Panc1 (cell line): ENCODE measurements at regions of chr21 and their contacts with region 1.

Region 1: DNA sequence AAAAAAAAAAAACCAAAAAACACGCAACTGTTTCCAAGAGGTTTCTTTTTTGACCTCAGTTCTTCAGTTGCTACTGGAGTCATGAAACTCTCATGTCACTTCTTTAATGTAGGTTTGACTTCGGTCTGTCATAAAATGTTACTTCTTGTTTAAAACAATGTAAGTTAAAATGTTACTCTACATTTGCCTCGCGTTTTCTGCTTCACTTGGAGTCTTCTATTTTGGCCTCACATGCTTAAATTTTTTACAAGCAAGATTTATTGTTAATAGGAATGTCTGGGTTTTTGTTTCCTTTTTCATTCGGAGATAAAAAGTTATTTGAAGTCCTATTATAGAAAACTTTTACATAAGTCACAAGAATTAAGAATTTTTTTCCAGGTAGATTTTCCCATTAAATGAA is 880.2 kb downstream of the LTN1 start:
- DNase-seq: no peak
- ATAC-seq: no peak
- H3K4me3 ChIP-seq: no peak overlapping the region
- H3K27ac ChIP-seq: no peak overlapping the region
- H3K4me1 ChIP-seq: no peaks in the 10 kb centered on the region
- H3K27me3 ChIP-seq: no peaks in the 10 kb centered on the region
- CTCF ChIP-seq: no peak

Region 2: GRCh38 chr21:27371115-27371974 is 741.2 kb before region 1 on chr21:
- CTCF ChIA-PET with region 1: no interaction called
- POLR2A ChIA-PET with region 1: interaction called, 14 read pairs
- in situ Hi-C with region 1: no loop called
- intact Hi-C with region 1: no loop called
- DNase-seq: no peak
- ATAC-seq: no peak
- H3K4me3 ChIP-seq: no peak overlapping the region
- H3K27ac ChIP-seq: no peak overlapping the region
- H3K4me1 ChIP-seq: no peaks in the 10 kb centered on the region
- H3K27me3 ChIP-seq: no peaks in the 10 kb centered on the region
- CTCF ChIP-seq: no peak

Region 3: GRCh38 chr21:28099001-28099705 is 13.4 kb before region 1 on chr21:
- CTCF ChIA-PET with region 1: no interaction called
- POLR2A ChIA-PET with region 1: no interaction called
- in situ Hi-C with region 1: no loop called
- intact Hi-C with region 1: no loop called
- DNase-seq: no peak
- ATAC-seq: no peak
- H3K4me3 ChIP-seq: no peak overlapping the region
- H3K27ac ChIP-seq: no peak overlapping the region
- H3K4me1 ChIP-seq: no peaks in the 10 kb centered on the region
- H3K27me3 ChIP-seq: no peaks in the 10 kb centered on the region
- CTCF ChIP-seq: no peak

Region 4: GRCh38 chr21:28207436-28208173 is 95.1 kb after region 1 on chr21:
- CTCF ChIA-PET with region 1: no interaction called
- POLR2A ChIA-PET with region 1: no interaction called
- in situ Hi-C with region 1: no loop called
- intact Hi-C with region 1: no loop called
- DNase-seq: no peak
- ATAC-seq: no peak
- H3K4me3 ChIP-seq: no peak overlapping the region
- H3K27ac ChIP-seq: no peak overlapping the region
- H3K4me1 ChIP-seq: no peaks in the 10 kb centered on the region
- H3K27me3 ChIP-seq: no peaks in the 10 kb centered on the region
- CTCF ChIP-seq: no peak

Region 5: GRCh38 chr21:28298251-28298672 is 185.8 kb after region 1 on chr21:
- CTCF ChIA-PET with region 1: no interaction called
- POLR2A ChIA-PET with region 1: no interaction called
- in situ Hi-C with region 1: no loop called
- intact Hi-C with region 1: no loop called
- DNase-seq: no peak
- ATAC-seq: no peak
- H3K4me3 ChIP-seq: no peak overlapping the region
- H3K27ac ChIP-seq: no peak overlapping the region
- H3K4me1 ChIP-seq: no peaks in the 10 kb centered on the region
- H3K27me3 ChIP-seq: no peaks in the 10 kb centered on the region
- CTCF ChIP-seq: no peak